ENCODE measurements at regions of chr5 and their contacts with region 1.

Region 1: GRCh38 chr5:14118527-14119320 is 24.4 kb upstream of the TRIO start:
- DNase-seq: no peak
- H3K4me3 ChIP-seq: no peak overlapping the region
- H3K27me3 ChIP-seq: no peaks in the 10 kb centered on the region
- CTCF ChIP-seq: no peak

Region 2: DNA sequence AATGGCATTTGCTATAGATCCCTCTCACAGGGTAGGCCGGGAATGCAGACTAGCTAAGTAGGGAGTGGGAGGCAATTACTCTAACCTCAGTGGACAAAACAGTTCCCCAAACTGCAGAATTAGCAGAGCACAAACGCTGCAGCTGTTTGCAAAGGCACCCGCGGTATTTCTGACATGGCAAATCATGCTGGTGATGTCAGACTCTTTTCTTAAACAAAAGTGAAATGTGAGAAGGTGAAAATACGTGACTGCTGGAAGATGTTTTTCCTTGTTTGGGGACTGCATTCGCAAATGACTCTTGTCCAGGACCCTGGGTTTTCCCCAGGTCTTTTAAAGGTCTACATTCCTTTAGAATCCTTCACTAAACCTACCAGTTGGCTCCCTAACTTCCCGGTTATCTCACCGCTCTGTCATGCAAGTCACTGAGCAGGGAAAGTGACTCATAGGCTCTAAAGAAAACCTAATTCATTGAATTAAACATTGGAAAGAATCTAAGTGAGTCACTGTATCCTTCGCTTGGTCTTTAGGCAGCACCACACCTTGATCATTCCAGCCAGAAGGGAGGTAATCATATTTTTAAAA is 82.8 kb before region 1 on chr5:
- CTCF ChIA-PET with region 1: no interaction called
- POLR2A ChIA-PET with region 1: no interaction called
- DNase-seq: peak; percentile 99
- H3K4me3 ChIP-seq: no peak overlapping the region
- H3K27me3 ChIP-seq: no peaks in the 10 kb centered on the region
- CTCF ChIP-seq: no peak

Region 3: DNA sequence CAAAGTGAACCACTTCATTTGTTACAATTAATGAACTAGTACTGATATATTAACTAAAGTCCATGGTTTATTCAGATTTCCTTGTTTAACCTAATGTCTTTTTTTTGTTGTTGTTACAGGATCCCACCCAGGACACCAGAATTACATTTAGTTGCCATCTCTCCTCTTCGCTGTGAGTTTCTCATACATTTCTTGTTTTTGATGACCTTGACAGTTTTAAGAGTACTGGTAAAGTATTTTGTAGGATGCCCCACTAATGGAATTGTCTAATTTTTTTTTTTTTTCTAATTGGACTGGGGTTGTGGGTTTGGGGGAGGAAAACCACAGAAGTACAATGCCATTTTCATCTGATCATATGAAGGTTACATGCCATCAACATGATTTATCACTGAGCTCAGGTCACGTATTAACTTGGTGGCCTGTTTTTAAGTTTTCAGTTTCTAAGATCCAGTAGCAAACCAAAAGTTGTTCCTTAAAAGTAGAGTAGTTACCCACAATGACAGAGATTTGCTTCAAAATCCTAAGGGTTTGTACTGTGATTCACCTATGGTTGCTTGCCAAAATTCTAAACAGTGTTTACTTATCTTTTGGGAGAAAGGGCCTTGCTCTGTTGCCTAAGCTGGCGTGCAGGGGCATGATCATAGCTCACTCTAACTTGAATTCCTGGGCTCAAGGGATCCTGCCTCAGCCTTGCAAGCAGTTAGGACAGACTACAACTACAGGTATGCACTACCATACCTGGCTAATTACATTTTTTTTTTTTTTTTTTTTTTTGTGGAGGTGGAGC is 541.3 kb after region 1 on chr5:
- CTCF ChIA-PET with region 1: no interaction called
- POLR2A ChIA-PET with region 1: interaction called, 10 read pairs
- DNase-seq: peak; percentile 32
- H3K4me3 ChIP-seq: no peak overlapping the region
- H3K27me3 ChIP-seq: peaks cover 1% of the 10 kb centered on the region; the same call in 1 of the 2 replicates
- CTCF ChIP-seq: no peak